Right ventricle myocardium inferior (tissue), 1 donor: ENCODE measurements at regions of chr7 and their contacts with region 1.

Region 1: DNA sequence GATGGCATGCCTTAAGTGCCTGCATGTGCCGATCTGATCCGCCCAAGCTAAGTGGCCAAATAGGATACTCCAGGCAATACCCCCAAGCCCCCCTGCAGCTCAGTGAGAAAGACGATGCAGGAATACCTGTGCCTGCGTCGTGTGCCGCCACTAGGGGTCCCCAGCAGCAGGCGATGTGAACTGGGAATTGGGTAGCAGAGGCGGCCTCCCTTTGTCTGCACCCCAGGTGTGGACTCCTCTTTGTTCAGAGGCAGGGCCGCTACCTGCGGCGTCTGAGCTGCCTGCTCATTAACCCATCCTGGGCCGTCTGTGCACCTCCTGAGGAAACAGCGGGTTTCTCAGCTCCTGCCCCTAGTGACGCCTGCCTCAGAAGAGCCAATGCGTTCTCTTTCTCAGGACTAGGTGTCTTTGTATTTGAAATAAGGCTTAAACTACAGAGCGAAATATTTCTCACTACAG is 4.8 kb upstream of the CHN2 start:
- DNase-seq: peak; percentile 83
- ATAC-seq: peak; percentile 56

Region 2: GRCh38 chr7:28926871-28927597 is 262.7 kb before region 1 on chr7:
- intact Hi-C with region 1: loop called (anchors 10 kb)
- DNase-seq: peak; percentile 80
- ATAC-seq: peak; percentile 91

Region 3: DNA sequence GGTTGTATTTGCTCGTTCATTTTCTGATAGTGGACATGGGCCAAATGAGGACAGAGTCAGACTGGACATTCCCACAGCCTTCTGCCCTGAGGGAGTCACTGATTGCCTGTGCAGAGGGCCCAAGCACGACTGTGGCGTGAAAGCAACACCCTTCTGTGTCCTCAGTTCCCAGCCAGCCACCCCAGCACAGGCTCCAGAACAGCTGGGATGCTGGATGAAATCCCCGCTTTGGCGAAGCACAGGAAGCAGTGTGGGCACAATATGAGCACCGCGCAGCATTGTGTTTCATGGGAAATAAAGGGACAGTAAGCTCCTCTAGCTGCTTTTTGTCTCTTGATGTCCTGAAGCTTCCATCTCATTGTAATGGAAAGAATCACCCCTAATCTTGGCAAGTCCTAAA is 252.2 kb before region 1 on chr7:
- intact Hi-C with region 1: no loop called
- DNase-seq: no peak
- ATAC-seq: no peak

Region 4: GRCh38 chr7:29343399-29343798 is 153.6 kb after region 1 on chr7:
- intact Hi-C with region 1: loop called (anchors 5 kb)
- DNase-seq: no peak
- ATAC-seq: no peak